Heart right ventricle (tissue), 16 donors: ENCODE measurements at regions of chr18 and their contacts with region 1.

Region 1: DNA sequence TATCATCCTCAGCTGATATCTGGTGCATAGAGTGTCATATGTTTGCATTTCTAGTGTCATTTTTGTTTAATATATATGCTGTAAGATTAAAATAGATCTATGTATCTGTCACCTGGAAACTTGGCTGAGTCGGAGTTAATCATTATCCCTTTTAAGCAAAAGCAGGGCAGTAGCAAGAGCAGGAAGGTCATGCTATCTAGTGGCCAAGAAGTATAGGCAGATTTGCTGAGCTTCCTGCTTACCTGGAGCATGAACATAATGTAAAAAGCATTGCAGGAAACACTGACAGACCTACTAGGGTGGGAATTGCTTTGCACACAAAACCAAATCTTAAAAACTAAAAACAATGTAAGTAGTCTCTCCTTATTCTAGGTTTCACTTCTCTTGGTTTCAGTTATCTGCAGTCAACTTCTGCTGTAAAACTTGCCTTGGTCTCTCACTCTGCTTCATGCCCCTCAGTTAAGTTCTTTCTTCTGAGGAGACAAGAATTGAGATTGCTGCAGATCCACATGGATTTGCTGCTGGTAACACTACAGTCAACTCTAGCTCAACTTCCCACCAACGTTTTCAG is 295.3 kb downstream of the CDH7 start:
- DNase-seq: no peak
- ATAC-seq: no peak
- H3K4me3 ChIP-seq: no peak overlapping the region
- H3K27ac ChIP-seq: no peak overlapping the region
- H3K4me1 ChIP-seq: no peaks in the 10 kb centered on the region
- H3K27me3 ChIP-seq: no peaks in the 10 kb centered on the region
- CTCF ChIP-seq: no peak

Region 2: DNA sequence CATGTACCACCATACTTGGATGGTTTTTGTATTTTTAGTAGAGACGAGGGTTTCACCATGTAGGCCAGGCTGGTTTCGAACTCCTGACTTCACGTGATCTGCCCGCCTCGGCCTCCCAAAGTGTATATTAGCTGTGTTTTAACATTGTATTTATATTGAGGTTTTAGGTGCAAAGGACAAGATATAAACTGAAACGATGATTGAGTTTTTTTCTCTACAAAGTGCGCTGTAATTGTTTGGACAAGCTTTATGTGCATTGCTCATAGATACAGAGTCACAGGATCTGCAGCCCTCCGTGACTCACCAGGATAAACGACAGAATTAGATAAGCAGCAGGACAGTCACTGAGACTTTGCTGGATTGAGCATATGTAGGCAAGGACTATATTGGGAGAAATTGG is 277.7 kb before region 1 on chr18:
- intact Hi-C with region 1: no loop called
- DNase-seq: no peak
- ATAC-seq: no peak
- H3K4me3 ChIP-seq: no peak overlapping the region
- H3K27ac ChIP-seq: no peak overlapping the region
- H3K4me1 ChIP-seq: no peaks in the 10 kb centered on the region
- H3K27me3 ChIP-seq: no peaks in the 10 kb centered on the region
- CTCF ChIP-seq: no peak

Region 3: DNA sequence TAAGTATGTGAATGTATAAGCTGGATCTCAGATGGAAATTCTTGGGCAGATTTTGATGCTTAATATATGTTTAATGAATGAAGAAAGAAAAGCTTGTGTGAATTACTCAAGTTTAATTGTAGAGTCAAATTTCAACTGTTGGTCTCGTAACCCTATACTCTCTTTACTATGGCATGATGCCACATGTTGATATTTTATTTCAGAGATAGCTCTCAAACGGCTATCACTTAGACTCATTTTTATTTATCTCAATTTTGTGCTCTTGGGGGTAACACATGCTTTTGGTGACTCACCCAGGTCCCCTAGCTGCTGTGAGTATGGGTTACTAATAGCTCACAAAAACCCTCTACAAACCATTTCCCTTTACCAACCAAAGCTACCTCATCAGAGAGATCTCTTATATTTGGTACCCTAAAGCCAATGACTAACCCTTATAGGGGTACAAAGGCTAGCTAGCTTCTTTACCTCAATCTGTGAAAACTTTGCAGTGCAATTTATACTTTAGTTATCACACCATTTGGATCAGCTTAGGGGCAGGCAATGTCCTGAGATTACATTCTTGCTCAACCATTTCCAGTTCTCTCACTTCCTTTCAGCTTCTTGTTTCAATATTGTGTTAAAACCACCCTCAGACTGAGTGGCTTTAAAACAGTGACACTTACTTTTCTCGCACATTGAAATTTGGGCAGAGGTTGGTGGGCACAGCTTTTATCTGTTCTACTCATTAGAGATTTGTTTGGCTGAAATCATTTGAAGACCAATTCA is 55.0 kb before region 1 on chr18:
- intact Hi-C with region 1: loop called in 1 of 10 experiments (anchors 10 kb)
- DNase-seq: no peak
- ATAC-seq: no peak
- H3K4me3 ChIP-seq: no peak overlapping the region
- H3K27ac ChIP-seq: no peak overlapping the region
- H3K4me1 ChIP-seq: no peaks in the 10 kb centered on the region
- H3K27me3 ChIP-seq: no peaks in the 10 kb centered on the region
- CTCF ChIP-seq: no peak